Naive thymus-derived CD8-positive, alpha-beta T cell (primary cell): ENCODE measurements at regions of chr12 and their contacts with region 1.

Region 1: GRCh38 chr12:44875954-44876553 is at the start of gene NELL2:
- DNase-seq: peak; percentile 46 to 85 (median 66)
- ATAC-seq: peak; percentile 67 to 69
- H3K4me3 Mint-ChIP-seq: peak within 1 kb of the TSS; percentile 95 to 100 (median 98)
- H3K27ac Mint-ChIP-seq: peak within 1 kb of the TSS; percentile 92 to 98 (median 96)
- H3K4me1 Mint-ChIP-seq: peaks cover 11 to 40% (median 23%) of the 10 kb centered on the region in 4 donors
- H3K27me3 Mint-ChIP-seq: peaks cover 0 to 19% (median 0%) of the 10 kb centered on the region in 5 donors
- polyA plus RNA-seq, gene NELL2: 320 to 498 (median 397) TPM

Region 2: DNA sequence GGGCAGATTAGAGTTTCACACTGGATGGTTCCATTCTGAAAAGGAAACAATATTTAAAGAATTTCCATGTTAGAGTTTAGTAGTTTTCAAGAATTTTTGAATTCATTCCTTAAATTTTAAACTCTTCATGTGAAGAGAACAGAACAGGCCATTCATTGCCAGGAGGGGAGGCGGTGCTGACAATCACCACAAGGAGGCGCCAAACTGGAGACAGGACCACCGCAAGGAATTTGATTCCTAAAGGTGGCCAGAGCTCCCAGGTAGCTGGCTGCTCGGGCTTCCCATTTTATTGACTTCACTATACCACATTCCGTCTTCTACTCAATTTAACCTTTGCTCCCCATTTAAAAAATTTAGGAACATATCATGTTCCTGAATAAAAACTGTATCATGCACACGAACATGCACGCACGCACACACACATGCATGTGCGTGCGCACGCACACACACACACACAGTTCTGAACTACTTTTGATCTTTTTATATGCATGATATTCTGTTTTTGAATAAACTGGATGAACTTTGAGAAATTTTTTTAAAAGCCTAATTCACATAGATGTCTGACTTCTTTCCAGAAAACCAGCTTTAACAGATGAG is 101.1 kb before region 1 on chr12:
- POLR2A ChIA-PET with region 1: interaction called, 36 read pairs
- DNase-seq: peak; percentile 39 to 81 (median 64)
- ATAC-seq: peak; percentile 55 to 67
- H3K4me3 Mint-ChIP-seq: peak overlapping the region in 1 of 10 donors; percentile 76
- H3K27ac Mint-ChIP-seq: peak overlapping the region in 7 of 10 donors; percentile 17 to 83 (median 67)
- H3K4me1 Mint-ChIP-seq: peaks cover 5 to 16% (median 7%) of the 10 kb centered on the region in 4 donors
- H3K27me3 Mint-ChIP-seq: no peaks in the 10 kb centered on the region

Region 3: GRCh38 chr12:44817687-44818086 is 58.4 kb before region 1 on chr12:
- POLR2A ChIA-PET with region 1: interaction called, 121 read pairs
- DNase-seq: no peak
- ATAC-seq: peak in 1 of 2 donors; percentile 73
- H3K4me3 Mint-ChIP-seq: peak overlapping the region in 9 of 10 donors; percentile 13 to 72 (median 52)
- H3K27ac Mint-ChIP-seq: peak overlapping the region; percentile 69 to 94 (median 90)
- H3K4me1 Mint-ChIP-seq: peaks cover 41 to 84% (median 78%) of the 10 kb centered on the region in 4 donors
- H3K27me3 Mint-ChIP-seq: no peaks in the 10 kb centered on the region

Region 4: DNA sequence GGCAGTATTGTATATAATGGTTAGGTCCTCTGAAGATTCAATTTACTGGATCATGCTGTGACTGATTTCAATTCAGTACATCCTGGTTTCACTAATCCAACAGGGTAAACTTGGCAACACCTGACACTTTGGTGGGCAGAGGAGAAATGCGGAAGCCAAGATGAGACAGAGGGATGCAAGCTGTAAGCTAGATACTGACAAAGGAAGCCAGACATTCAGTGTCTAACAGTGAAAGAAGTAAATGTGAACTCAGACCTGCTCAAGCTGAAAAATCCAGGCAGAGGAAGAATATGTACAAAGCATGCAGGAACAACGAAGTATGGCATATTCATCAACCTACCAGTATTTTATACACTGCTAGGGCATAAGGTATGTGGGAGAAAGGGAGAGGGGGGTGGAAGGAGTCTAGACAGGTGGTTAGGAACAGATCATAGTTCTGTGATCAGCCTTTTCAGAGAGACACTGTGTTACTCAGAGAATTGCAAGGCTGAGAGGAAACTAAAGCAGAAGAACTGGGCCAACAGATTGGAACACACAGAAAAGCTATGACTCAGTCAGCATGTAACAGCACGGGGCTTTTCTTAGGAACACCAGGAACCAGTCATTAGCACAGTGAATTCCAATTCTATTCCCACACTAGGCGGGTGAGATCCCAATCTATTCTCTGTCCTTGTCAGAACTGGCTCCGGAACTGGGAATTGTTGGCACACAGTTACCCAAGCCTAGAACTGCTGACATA is 40.2 kb before region 1 on chr12:
- POLR2A ChIA-PET with region 1: interaction called, 95 read pairs
- DNase-seq: peak in 5 of 10 donors; percentile 21 to 58 (median 44)
- ATAC-seq: peak; percentile 72 to 78
- H3K4me3 Mint-ChIP-seq: peak overlapping the region; percentile 72 to 91 (median 84)
- H3K27ac Mint-ChIP-seq: peak overlapping the region; percentile 83 to 97 (median 95)
- H3K4me1 Mint-ChIP-seq: peaks cover 48 to 94% (median 91%) of the 10 kb centered on the region in 4 donors
- H3K27me3 Mint-ChIP-seq: no peaks in the 10 kb centered on the region

Region 5: DNA sequence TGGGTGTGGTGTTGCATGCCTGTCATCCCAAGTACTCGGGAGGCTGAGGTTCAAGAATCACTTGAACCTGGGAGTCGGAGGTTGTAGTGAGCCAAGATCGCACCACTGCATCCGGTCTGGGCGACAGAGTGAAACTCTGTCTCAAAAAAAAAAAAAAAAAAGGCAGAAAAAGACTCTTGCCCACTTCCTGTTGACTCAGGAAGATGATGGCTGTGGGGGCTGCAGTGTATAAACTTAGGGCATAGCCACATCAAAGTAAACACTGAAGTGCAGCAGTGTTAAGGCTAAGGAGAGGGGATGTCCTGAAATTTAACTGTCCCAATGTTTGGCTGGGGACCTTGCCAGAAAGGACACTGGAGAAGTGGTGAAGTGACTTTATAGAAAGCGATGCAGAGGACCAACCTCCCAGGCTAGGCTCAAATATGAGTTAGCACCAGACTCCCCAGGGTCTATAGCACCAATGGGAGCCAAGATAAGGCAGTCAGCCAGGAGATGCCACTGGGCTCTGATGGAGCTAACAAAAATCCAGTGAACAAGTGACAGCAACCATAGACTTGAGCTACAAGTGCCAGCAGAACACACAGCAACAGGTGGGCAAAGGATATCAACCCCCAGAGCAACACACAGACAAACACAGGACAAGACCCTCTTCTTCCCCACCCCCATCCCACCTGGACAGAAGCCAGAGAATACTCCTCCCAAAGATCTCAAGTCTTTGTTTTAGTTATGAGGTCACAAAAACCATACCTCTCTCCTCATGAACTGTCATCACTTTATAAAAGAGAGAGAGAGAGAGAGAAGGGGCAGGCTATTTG is 28.0 kb before region 1 on chr12:
- POLR2A ChIA-PET with region 1: interaction called, 95 read pairs
- DNase-seq: peak; percentile 45 to 91 (median 78)
- ATAC-seq: peak; percentile 82 to 91
- H3K4me3 Mint-ChIP-seq: peak overlapping the region; percentile 65 to 90 (median 82)
- H3K27ac Mint-ChIP-seq: peak overlapping the region; percentile 90 to 100 (median 98)
- H3K4me1 Mint-ChIP-seq: peaks cover 34 to 83% (median 82%) of the 10 kb centered on the region in 4 donors
- H3K27me3 Mint-ChIP-seq: no peaks in the 10 kb centered on the region

Region 6: DNA sequence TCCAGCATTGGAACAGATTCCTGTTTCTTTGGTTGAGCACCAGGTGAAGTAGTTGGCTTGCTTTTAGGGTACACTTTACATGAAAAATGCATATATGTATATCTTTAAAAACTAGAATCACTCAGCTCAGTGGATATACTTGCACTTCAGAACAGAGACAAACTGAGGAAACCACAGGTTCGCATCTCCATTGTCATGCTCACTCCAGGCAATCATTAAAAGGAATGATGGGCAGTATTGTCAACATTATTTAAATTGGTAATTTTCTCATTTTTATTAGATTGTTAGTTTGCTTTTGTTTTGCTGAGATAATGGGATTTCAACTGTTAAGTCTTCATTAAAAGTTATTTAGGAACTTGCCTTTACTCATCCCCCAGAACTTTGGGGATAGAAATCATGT is 71.1 kb after region 1 on chr12:
- POLR2A ChIA-PET with region 1: no interaction called
- DNase-seq: no peak
- ATAC-seq: no peak
- H3K4me3 Mint-ChIP-seq: no peak overlapping the region
- H3K27ac Mint-ChIP-seq: no peak overlapping the region
- H3K4me1 Mint-ChIP-seq: peaks cover 0 to 3% (median 3%) of the 10 kb centered on the region in 4 donors
- H3K27me3 Mint-ChIP-seq: peaks cover 2 to 15% (median 8%) of the 10 kb centered on the region in 5 donors

Region 7: DNA sequence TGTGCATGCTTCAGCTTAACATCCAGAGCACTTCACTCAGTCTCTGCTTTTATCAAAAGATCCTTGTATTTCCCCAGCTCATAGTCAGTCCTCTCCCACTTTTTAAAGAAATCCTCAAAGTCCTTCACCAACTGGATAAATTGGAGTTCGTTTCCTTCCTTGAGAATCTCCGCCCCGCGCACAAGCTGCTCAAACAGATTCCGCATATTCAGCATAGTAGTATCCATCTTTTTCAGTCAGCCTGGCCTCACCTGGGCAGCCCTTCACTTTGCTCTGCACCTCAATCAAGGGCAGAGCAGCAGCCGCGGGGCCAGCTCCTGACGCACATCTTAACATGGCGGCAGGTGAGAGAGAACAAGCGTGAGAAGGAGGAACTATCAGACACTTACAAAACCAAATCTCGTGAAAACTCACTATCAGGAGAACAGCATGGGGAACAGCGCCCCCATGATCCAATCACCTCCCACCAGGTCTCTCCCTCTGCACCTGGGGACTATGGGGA is 189.1 kb after region 1 on chr12:
- POLR2A ChIA-PET with region 1: no interaction called
- DNase-seq: no peak
- ATAC-seq: no peak
- H3K4me3 Mint-ChIP-seq: no peak overlapping the region
- H3K27ac Mint-ChIP-seq: no peak overlapping the region
- H3K4me1 Mint-ChIP-seq: no peaks in the 10 kb centered on the region
- H3K27me3 Mint-ChIP-seq: peaks cover 7 to 26% (median 15%) of the 10 kb centered on the region in 5 donors